Activated CD4-positive, alpha-beta T cell treated with anti-CD3 and anti-CD28 coated beads for 36 hours (primary cell): ENCODE measurements at regions of chr3 and their contacts with region 1.

Region 1: GRCh38 chr3:132641837-132642538 is 17.6 kb downstream of the ACAD11 start:
- DNase-seq: no peak
- ATAC-seq: peak; percentile 39
- H3K4me3 Mint-ChIP-seq: no peak overlapping the region
- H3K27ac Mint-ChIP-seq: no peak overlapping the region
- H3K4me1 Mint-ChIP-seq: peaks cover 4% of the 10 kb centered on the region
- H3K27me3 Mint-ChIP-seq: no peaks in the 10 kb centered on the region

Region 2: DNA sequence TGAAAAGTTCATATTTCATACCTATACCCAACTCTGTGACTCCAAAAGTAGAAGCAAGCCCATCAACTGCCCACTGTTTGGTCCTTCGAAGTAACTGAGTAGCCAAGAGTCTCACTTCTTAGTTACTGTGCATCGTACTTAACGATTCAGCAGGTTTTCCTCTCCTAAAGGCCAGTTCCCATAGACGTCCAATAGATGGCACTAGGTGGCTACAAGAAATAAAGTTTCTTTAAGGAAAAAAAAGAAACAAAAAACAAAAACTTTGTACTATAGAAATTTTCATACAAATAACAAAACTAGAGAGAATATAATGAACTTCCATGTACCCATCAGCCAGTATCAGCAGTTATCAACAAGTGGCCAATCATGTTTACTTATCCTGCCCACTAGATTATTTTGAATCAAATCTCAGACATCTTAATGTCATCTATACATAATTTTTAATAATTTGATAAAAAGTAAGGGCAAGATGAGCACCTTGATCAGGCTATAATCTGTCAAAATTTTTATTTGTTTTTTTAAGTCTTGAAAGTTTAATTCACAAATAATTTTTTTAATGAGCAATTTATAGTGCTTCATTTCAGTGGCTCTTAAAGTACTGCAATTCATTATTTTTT is 388.6 kb before region 1 on chr3:
- CTCF ChIA-PET with region 1: no interaction called
- POLR2A ChIA-PET with region 1: no interaction called
- intact Hi-C with region 1: loop called in 1 of 2 experiments (anchors 10 kb)
- DNase-seq: peak; percentile 13
- ATAC-seq: peak; percentile 44
- H3K4me3 Mint-ChIP-seq: no peak overlapping the region
- H3K27ac Mint-ChIP-seq: no peak overlapping the region
- H3K4me1 Mint-ChIP-seq: no peaks in the 10 kb centered on the region
- H3K27me3 Mint-ChIP-seq: peaks cover 7% of the 10 kb centered on the region

Region 3: DNA sequence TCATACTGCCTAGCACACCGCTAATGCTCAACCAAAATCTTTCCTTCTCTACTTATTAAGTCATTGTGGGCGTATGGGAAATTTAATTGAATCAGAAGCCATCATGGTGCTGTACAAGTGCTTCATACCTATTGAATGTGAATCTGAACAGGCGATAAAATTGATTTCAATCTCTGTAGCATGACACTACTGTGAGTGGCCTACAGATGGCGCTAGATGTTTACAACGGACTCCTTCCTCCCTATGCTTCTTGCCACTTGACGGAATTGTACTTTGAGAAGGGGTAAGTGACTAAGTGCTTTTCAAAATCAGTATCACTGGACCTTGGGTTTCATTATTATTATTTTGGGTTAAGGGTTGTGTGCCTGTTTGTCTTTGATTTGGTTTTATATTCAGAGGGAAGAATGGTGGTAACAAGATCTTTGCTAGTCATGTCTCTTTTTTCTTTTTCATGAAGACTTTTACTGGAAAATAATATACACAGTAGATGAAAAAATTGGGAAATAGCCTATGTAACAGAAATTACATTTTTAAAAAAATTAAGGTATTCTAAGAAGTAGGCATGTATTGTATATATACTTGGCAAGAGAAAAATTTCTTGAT is 289.3 kb before region 1 on chr3:
- CTCF ChIA-PET with region 1: interaction called, 10 read pairs
- POLR2A ChIA-PET with region 1: no interaction called
- intact Hi-C with region 1: loop called (anchors 1 kb)
- DNase-seq: peak; percentile 81
- ATAC-seq: peak; percentile 92
- H3K4me3 Mint-ChIP-seq: no peak overlapping the region
- H3K27ac Mint-ChIP-seq: no peak overlapping the region
- H3K4me1 Mint-ChIP-seq: peaks cover 8% of the 10 kb centered on the region
- H3K27me3 Mint-ChIP-seq: peaks cover 3% of the 10 kb centered on the region

Region 4: DNA sequence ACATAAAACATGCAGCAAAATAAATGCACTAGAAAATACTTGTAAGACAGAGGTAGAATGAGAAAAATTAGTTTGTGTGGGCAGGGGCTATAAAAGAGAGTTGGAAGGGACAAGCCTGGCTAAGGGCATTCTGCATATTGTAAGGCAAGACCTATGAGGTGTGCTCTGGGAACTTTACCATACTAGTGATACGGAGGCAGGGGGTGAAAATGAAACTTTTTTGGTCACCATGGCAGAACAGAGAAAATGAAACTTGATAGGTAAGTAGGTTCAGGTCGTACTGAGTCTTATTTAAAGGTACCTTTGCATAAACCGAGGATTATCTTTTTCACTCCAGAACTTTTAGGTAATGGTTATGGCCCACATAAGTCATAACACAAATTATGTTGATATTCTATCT is 119.6 kb before region 1 on chr3:
- CTCF ChIA-PET with region 1: interaction called, 14 read pairs
- POLR2A ChIA-PET with region 1: no interaction called
- intact Hi-C with region 1: no loop called
- DNase-seq: no peak
- ATAC-seq: peak; percentile 71
- H3K4me3 Mint-ChIP-seq: no peak overlapping the region
- H3K27ac Mint-ChIP-seq: no peak overlapping the region
- H3K4me1 Mint-ChIP-seq: peaks cover 16% of the 10 kb centered on the region
- H3K27me3 Mint-ChIP-seq: no peaks in the 10 kb centered on the region

Region 5: GRCh38 chr3:132535575-132536441 is 106.2 kb before region 1 on chr3:
- CTCF ChIA-PET with region 1: interaction called, 102 read pairs
- POLR2A ChIA-PET with region 1: no interaction called
- intact Hi-C with region 1: loop called (anchors 1 kb)
- DNase-seq: peak; percentile 74
- ATAC-seq: peak; percentile 54
- H3K4me3 Mint-ChIP-seq: no peak overlapping the region
- H3K27ac Mint-ChIP-seq: no peak overlapping the region
- H3K4me1 Mint-ChIP-seq: peaks cover 9% of the 10 kb centered on the region
- H3K27me3 Mint-ChIP-seq: no peaks in the 10 kb centered on the region

Region 6: DNA sequence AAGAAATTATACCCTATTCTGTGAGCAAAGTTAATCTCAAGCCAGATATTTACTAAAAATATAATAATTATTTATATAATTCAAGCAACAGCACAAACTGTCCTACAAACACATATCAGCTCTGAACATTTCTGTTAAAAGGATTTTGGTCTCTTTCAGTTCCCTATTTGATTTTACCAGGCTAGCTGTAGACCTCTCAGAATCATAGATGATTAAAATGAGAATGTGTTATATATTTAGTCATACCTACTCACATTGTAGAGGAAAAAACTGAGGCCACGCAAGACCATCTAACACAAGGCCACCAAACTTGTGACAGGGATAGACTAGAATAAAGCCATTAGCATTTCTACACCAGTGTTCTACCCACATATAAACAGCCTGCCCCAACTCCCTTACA is 16.4 kb before region 1 on chr3:
- CTCF ChIA-PET with region 1: interaction called, 12 read pairs
- POLR2A ChIA-PET with region 1: no interaction called
- intact Hi-C with region 1: no loop called
- DNase-seq: no peak
- ATAC-seq: no peak
- H3K4me3 Mint-ChIP-seq: no peak overlapping the region
- H3K27ac Mint-ChIP-seq: no peak overlapping the region
- H3K4me1 Mint-ChIP-seq: peaks cover 6% of the 10 kb centered on the region
- H3K27me3 Mint-ChIP-seq: no peaks in the 10 kb centered on the region